ENCODE measurements at regions of chr2 and their contacts with region 1.

Region 1: DNA sequence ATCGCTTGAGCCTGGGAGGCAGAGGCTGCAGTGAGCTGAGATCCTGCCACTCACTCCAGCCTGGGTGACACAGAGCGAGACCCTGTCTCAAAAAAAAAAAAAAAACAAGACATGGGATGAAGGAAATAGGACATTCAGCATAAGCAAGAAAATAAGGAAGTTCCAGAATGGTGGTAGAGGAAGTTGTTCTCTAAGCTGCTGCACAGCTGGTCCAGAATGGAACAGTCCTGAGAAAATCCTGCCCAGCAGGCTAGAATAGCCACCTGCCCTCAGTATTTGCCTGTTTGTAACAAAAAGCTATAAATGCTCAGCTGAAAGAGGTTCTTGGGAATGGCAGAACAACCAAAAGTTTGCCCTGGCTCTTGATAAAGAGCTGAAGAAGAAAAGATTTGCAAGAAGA is 11.1 kb upstream of the MAPRE3 start:
- DNase-seq: no peak
- H3K4me3 Mint-ChIP-seq: no peak overlapping the region
- H3K27ac Mint-ChIP-seq: no peak overlapping the region
- H3K4me1 Mint-ChIP-seq: no peaks in the 10 kb centered on the region
- H3K27me3 Mint-ChIP-seq: peaks cover 12% of the 10 kb centered on the region

Region 2: DNA sequence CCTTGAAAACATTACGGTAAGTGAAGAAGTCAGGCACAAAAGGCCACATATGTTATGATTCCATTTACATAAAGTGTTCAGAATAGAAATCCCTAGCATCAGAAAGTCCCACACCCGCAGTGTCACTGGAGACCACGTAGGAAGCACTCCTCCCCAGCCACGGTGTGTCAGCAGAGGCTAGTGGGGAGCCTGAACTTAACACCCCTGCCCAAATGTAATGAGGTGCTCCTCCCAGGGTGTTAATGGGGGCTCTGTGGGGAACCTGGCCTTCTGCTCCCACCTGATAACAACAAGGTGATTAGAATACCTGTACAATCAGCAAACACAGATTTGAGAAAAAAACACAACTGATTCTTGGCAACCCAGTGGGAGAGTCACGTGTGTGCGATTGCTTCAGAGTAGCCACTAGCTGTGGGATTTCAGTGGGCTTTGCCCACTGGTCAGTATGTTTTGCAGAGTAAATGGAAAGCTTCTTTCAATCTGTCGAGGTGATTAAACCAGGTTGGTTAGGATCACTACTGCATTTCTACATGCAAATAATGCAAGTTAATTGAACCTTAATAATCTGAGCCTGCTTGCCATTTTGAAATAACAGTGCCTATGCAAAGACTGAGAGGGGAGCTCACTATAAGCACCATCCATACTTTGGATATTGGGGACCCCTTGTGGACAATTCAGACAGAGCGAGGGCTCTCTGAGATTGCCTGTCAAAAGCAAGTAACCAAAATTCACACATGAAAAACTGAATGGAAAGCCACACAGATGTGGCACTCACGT is 231.9 kb after region 1 on chr2:
- CTCF ChIA-PET with region 1: interaction called, 7 read pairs
- intact Hi-C with region 1: loop called (anchors 1 kb)
- DNase-seq: peak; percentile 71
- H3K4me3 Mint-ChIP-seq: no peak overlapping the region
- H3K27ac Mint-ChIP-seq: no peak overlapping the region
- H3K4me1 Mint-ChIP-seq: no peaks in the 10 kb centered on the region
- H3K27me3 Mint-ChIP-seq: no peaks in the 10 kb centered on the region